Cardiac septum (tissue), 1 donor: ENCODE measurements at regions of chr13 and their contacts with region 1.

Region 1: GRCh38 chr13:40401911-40402776 is 264.3 kb downstream of the FOXO1 start:
- DNase-seq: peak; percentile 97

Region 2: DNA sequence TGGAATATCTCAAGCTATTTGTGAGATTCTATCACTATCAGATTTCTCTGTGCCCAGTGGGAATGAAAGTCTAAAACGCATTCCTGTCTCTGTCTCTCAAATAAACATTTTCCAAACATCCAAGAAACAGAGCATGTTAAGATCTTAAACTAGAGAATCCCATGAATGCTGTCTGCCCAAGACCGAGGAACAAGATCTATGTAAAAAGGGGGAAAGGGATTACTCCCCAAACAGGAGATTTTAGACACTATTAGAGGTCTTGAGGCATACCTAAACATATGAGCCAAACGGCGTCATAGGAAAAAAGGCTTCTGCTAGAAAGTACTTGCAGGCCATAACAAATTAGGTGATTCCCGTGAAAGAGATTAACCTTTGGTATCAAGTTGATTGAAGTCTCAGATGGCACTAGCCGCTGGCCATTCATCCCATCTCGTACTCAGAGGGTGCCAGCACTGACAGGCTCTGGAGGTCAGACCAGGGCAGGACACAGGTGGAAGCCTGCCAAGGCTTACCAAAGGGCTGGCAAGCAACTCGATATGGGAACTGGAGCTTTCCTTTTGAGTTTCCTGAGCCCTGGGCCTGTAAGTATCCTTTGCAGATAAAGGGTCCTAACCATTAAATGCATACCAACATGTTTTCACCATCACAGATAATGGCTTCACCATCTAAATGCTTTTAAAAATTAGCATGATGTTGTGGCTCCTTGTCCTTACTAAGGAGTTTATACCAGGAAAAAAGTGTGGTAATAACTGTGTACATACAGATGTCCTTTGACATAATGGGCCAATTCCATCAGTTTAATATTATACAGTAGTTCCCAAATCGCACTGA is 39.1 kb after region 1 on chr13:
- intact Hi-C with region 1: loop called (anchors 2 kb)
- DNase-seq: peak; percentile 88

Region 3: DNA sequence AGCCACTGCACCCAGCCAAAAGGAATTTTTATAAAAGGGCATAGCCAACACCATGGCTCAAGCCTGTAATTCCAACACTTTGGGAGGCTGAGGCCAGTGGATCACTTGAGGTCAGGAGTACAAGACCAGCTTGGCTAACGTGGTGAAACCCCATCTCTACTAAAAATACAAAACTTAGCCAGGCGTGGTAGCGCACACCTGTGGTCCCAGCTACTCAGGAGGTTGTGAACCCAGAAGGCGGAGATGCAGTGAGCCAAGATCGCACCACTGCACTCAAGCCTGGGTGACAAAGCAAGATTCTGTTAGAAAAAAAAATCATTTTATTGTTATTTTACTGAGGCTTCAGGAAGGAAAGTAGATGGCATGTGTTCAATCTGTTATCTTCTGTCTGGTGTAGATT is 295.6 kb after region 1 on chr13:
- intact Hi-C with region 1: no loop called
- DNase-seq: no peak